ENCODE measurements at regions of chr1 and their contacts with region 1.

Region 1: GRCh38 chr1:183685112-183685713 is 32.1 kb upstream of the APOBEC4 start:
- DNase-seq: no peak
- H3K4me3 ChIP-seq: no peak overlapping the region
- H3K27ac ChIP-seq: no peak overlapping the region
- H3K4me1 ChIP-seq: no peaks in the 10 kb centered on the region
- H3K27me3 ChIP-seq: no peaks in the 10 kb centered on the region
- CTCF ChIP-seq: peak; percentile 85

Region 2: DNA sequence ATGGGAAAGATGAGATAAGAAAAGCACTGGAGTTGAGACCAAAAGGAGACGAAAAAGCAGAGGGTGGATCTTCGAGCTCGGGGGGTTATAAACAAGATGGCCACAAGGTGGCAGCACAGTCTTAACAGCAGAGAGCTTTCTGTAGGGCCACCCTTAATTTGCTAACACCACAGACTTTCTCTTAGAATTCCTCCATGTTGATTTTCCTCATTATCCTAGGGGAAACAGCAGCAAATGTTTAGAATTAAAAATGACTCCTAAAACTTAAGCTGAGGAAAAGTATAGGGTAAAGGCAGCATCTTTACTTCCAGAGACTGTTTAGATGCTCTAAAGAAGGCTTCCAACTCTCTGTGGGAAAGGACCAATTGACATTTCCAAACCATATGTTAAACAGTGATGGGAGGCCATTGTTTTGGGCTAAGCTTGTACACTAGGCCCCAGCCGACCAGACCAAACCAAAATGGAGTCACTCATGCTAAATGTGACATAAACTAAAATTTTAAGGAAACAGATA is 29.6 kb before region 1 on chr1:
- intact Hi-C with region 1: loop called (anchors 5 kb)
- DNase-seq: peak; percentile 82
- H3K4me3 ChIP-seq: no peak overlapping the region
- H3K27ac ChIP-seq: no peak overlapping the region
- H3K4me1 ChIP-seq: peaks cover 13% of the 10 kb centered on the region
- H3K27me3 ChIP-seq: no peaks in the 10 kb centered on the region
- CTCF ChIP-seq: peak; percentile 75

Region 3: GRCh38 chr1:183915625-183916510 is 230.7 kb after region 1 on chr1:
- intact Hi-C with region 1: loop called (anchors 10 kb)
- DNase-seq: peak; percentile 72
- H3K4me3 ChIP-seq: no peak overlapping the region
- H3K27ac ChIP-seq: no peak overlapping the region
- H3K4me1 ChIP-seq: no peaks in the 10 kb centered on the region
- H3K27me3 ChIP-seq: no peaks in the 10 kb centered on the region
- CTCF ChIP-seq: peak; percentile 82

Measured in colonic mucosa (tissue), 4 donors.